Upper lobe of right lung (tissue), 1 donor: ENCODE measurements at regions of chr1 and their contacts with region 1.

Region 1: GRCh38 chr1:72296481-72296880 is 14.1 kb upstream of the NEGR1 start:
- DNase-seq: no peak
- ATAC-seq: no peak
- H3K4me3 ChIP-seq: no peak overlapping the region
- H3K27ac ChIP-seq: no peak overlapping the region
- H3K4me1 ChIP-seq: no peaks in the 10 kb centered on the region
- H3K27me3 ChIP-seq: no peaks in the 10 kb centered on the region
- CTCF ChIP-seq: no peak

Region 2: DNA sequence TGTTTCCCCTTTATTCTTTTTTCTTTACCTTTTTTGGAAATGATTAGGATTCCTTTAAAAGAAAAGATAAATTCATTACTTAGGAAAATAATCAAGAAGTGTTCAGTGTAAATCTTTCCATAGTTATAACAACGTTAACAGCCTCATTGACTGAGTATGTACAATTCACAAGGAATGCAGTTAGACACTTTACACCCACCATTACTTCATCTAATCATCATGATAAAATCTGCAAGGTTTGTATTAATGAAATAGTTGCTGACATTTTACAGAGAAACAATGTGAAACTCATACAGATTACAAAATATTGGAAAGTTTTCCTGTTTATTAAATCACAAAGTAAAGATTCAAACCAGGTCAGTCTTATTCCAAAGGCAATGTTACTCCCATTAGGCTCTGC is 45.2 kb after region 1 on chr1:
- intact Hi-C with region 1: loop called (anchors 2 kb)
- DNase-seq: no peak
- ATAC-seq: no peak
- H3K4me3 ChIP-seq: no peak overlapping the region
- H3K27ac ChIP-seq: no peak overlapping the region
- H3K4me1 ChIP-seq: no peaks in the 10 kb centered on the region
- H3K27me3 ChIP-seq: no peaks in the 10 kb centered on the region
- CTCF ChIP-seq: no peak